ENCODE measurements at regions of chr5 and their contacts with region 1.

Region 1: DNA sequence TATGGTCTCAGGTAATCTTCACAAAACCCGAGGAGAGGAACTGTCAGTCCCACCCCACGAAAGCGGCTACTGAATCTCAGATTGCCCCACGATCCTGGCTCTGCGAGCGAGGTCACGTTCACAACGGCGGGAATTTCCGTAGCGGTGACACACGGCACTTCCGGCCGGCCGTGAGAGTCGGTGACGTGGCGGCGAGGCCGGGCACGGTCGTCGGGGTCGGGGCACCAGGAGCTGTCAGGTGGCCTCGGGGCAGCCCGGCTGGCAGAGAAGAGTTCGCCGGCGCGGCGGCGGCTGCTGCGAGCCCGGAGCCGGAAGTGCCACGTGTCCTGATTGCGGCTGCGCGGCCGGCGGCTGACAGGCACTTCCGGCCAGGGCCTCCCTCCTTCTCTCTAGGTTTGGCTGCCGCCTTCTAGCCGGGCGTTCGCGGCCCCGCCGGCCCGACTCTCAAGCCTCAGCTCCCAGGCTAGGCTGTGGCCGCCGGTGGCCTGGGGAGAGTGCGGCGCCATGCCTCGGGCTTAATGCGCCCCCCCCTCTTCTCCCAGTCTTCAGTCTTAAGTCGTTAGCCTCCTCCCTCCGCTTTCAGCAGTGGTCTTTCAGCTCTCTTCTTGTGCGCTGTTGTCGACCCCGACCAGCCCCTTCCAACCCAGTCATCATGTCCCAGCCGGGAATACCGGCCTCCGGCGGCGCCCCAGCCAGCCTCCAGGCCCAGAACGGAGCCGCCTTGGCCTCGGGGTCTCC is at the start of gene SEC24A:
- DNase-seq: peak; percentile 89
- H3K4me3 Mint-ChIP-seq: peak within 1 kb of the TSS; percentile 87
- H3K27ac Mint-ChIP-seq: peak within 1 kb of the TSS; percentile 94
- H3K4me1 Mint-ChIP-seq: peaks cover 32% of the 10 kb centered on the region
- H3K27me3 Mint-ChIP-seq: no peaks in the 10 kb centered on the region
- total RNA-seq, gene SEC24A: 26.5 and 27.2 TPM in 2 replicates

Region 2: DNA sequence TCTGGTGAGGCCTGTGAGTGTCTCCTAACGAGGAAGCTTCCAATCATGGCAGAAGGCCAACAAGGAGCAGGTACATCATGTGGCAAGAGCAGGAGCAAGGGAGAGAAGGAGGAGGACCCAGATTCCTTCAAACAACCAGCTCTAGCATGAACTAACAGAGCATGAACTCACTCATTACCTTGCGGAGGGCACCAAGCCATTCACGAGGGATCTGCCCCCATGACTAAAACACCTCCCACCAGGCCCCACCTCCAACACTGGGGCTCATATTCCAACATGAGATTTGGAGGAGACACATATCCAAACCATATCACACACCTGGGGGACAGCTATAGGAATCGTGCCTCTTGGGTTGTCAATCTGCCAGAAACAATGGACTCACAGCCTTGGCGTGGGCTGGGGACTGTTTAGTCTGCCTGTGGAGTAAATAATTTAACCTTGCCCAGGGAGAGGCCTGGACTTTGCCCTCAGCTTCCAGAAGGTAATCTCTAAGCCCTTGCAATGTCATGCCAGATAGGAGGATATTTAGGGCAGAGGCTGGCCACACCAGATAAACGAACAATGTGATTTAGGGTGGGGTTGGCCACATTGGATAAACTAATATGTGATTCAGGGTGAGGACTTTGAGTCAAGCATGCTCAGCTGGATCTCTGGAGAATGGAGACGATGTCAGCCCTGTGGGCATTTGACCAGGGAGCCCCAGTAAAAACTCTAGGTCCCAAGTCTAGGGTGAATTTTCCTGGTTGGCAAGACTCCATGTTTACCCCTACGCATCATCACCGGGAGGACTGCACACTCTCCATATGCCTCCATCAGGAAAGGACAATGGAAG is 630.2 kb before region 1 on chr5:
- intact Hi-C with region 1: no loop called
- DNase-seq: no peak
- H3K4me3 Mint-ChIP-seq: no peak overlapping the region
- H3K27ac Mint-ChIP-seq: no peak overlapping the region
- H3K4me1 Mint-ChIP-seq: no peaks in the 10 kb centered on the region
- H3K27me3 Mint-ChIP-seq: peaks cover 5% of the 10 kb centered on the region

Region 3: DNA sequence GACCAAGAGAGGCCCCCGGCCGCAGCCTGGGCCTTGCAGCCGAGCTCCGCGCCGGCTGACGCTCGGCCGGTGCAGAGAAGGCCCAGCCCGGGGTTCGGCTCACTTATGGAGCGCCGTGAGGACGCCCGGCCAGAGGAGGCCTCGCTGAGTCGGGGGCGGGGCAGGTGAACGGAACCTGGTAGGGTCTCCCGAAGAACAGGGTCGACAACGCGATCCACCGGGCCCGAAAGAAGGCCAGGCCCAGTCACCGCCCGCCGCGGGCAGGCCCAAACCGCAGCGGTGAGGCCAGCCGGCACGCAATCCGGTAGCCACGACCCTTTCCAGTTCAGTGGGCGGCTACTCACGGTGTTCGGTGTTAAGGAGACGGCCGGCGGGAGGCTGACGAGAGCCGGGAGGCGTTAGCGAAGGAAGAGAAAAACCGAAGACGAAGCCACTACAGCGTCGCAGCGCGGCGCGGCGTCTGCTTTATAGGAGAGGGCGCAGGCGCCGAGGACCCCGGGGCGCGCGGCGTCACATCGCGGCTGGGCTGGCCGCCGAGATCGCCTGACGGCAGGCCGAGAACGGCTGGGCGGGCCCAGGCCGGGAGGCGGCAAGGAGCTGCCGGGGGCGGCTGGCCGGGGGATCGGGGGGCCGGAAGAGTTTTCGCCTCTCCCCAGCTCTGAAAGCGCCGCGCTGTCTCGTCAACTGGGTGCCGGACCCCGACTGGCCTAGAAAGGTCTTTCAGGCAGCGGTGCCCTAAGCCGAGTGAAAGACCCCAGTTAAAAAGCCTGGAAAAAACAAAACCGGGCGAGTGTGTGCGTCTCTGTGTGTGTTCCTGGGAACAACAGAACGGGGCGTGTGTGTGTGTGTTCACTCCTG is 471.9 kb before region 1 on chr5 and contains the start of gene SKP1:
- intact Hi-C with region 1: loop called (anchors 5 kb)
- DNase-seq: peak; percentile 85
- H3K4me3 Mint-ChIP-seq: peak within 1 kb of the TSS; percentile 96
- H3K27ac Mint-ChIP-seq: peak within 1 kb of the TSS; percentile 97
- H3K4me1 Mint-ChIP-seq: peaks cover 28% of the 10 kb centered on the region
- H3K27me3 Mint-ChIP-seq: peaks cover 6% of the 10 kb centered on the region
- total RNA-seq, gene SKP1: 259 and 265 TPM in 2 replicates

Region 4: DNA sequence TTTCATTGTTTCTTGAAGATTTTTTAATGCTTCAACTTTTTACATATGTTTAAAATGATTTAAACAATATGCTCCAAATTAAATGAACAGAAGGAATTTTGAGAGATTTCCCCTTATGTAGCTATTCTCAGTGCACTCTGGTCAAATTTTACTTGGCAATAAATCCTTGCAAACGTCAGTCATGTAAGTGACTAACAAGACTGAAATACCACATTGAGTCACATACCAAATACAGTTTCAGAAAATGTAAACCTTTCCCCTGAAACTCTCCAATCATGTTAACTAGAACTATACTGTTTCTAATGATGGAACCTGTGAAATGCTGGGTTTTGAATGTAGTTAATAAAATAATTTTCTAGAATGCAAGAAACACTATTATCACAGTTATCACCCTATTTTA is 45.5 kb before region 1 on chr5:
- intact Hi-C with region 1: loop called (anchors 1 kb)
- DNase-seq: no peak
- H3K4me3 Mint-ChIP-seq: peak overlapping the region; percentile 6
- H3K27ac Mint-ChIP-seq: peak overlapping the region; percentile 36
- H3K4me1 Mint-ChIP-seq: peaks cover 44% of the 10 kb centered on the region
- H3K27me3 Mint-ChIP-seq: no peaks in the 10 kb centered on the region

Region 5: DNA sequence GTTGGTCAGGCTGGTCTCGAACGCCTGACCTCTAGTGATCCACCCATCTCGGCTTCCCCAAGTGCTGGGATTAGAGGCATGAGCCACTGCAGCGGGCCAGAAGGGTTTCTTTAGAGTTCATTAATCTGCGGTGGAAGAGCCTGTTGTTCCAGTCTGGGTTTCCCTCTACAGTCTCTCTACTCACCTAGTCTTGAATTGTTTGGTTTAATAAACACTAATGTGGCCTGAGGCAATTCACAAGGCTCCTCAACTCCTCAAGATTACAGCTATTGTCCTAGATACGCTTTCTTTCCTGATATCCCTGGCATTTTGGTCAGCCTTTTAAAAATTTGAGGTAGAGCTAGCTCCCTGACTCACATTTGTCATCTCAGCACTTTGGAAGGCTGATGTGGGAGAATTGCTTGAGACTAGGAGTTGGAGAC is 11.4 kb before region 1 on chr5:
- intact Hi-C with region 1: loop called (anchors 1 kb)
- DNase-seq: no peak
- H3K4me3 Mint-ChIP-seq: no peak overlapping the region
- H3K27ac Mint-ChIP-seq: no peak overlapping the region
- H3K4me1 Mint-ChIP-seq: peaks cover 7% of the 10 kb centered on the region
- H3K27me3 Mint-ChIP-seq: no peaks in the 10 kb centered on the region

Region 6: GRCh38 chr5:134845852-134846640 is 197.5 kb after region 1 on chr5 and contains the start of gene C5orf24:
- intact Hi-C with region 1: loop called (anchors 1 kb)
- DNase-seq: peak; percentile 90
- H3K4me3 Mint-ChIP-seq: peak within 1 kb of the TSS; percentile 97
- H3K27ac Mint-ChIP-seq: peak within 1 kb of the TSS; percentile 97
- H3K4me1 Mint-ChIP-seq: peaks cover 25% of the 10 kb centered on the region
- H3K27me3 Mint-ChIP-seq: no peaks in the 10 kb centered on the region
- total RNA-seq, gene C5orf24: 42.2 and 43.2 TPM in 2 replicates

Measured in activated T-helper 1 cell treated with anti-CD3 and anti-CD28 coated beads, Interleukin-12 subunit alpha, Interleukin-12 subunit beta, Interleukin-2, Interleukin-4 antibody, amounts not matched to agents 30 ng/mL and 10 ng/mL and 1 ng/mL, durations not matched to agents 14 hours and 24 hours and 36 hours (primary cell).